ENCODE measurements at regions of chr10 and their contacts with region 1.

Region 1: DNA sequence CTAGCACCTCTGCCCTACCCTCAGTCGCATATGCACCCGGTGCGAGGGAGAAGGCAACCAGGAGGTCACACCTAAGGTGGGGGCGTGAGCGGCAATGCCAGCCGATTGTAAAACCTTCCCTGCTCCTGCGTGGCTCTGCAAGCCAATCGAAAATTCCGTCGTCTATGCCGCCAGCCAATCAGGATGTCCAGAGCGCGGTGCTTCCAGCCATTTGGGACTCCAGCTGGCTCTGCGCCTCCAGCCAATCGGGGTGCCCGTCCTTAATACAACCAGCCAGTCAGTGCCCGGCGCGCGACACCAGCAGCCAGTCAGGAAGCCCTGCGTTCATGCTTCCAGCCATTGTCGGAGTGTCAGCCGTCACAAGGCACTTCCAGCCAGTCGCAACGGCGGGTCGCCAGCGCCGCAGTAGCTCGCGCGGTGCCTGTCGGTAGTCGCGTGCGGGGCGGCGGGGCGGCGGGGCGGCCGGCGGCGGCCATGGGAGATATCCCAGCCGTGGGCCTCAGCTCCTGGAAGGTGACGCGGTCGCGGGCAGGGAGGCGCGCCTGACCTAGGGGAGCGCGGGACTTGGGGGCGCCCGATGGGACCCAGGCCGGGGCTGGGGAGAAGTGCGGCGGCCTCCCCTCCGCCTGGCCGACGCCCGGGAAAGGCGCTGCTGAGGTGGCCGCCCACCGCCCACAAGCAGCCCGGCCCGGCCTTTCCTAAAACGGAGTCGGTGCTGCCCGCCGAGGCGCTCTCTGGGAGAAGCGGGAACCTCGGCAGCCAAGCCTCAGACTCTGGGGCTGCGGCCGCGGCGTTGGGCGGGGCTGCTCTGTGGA is at the start of gene AKR1E2:
- DNase-seq: peak; percentile 48 to 86 (median 73)
- ATAC-seq: peak; percentile 92 to 94 (median 93)
- H3K4me3 ChIP-seq: peak within 1 kb of the TSS; percentile 49
- H3K4me3 Mint-ChIP-seq: peak within 1 kb of the TSS; percentile 73 to 76 (median 73)
- H3K27ac ChIP-seq: peak within 1 kb of the TSS; percentile 33
- H3K27ac Mint-ChIP-seq: peak within 1 kb of the TSS; percentile 56 to 77
- H3K4me1 ChIP-seq: peaks cover 4 to 15% of the 10 kb centered on the region in 2 experiments
- H3K4me1 Mint-ChIP-seq: peaks cover 12 to 41% (median 20%) of the 10 kb centered on the region in 3 donors
- H3K27me3 ChIP-seq: peaks cover 0 to 26% of the 10 kb centered on the region in 2 experiments
- H3K27me3 Mint-ChIP-seq: peaks cover 4 to 59% of the 10 kb centered on the region in 2 donors
- total RNA-seq, gene AKR1E2: 3.7 to 24.5 (median 10.8) TPM

Region 2: GRCh38 chr10:3538658-3539531 is 1287.2 kb before region 1 on chr10:
- CTCF ChIA-PET with region 1: no interaction called
- POLR2A ChIA-PET with region 1: interaction called in 1 of 2 experiments, 12 read pairs
- DNase-seq: no peak
- ATAC-seq: no peak
- H3K4me3 ChIP-seq: no peak overlapping the region
- H3K4me3 Mint-ChIP-seq: no peak overlapping the region
- H3K27ac ChIP-seq: no peak overlapping the region
- H3K27ac Mint-ChIP-seq: no peak overlapping the region
- H3K4me1 ChIP-seq: no peaks in the 10 kb centered on the region
- H3K4me1 Mint-ChIP-seq: no peaks in the 10 kb centered on the region
- H3K27me3 ChIP-seq: peaks cover 0 to under 1% of the 10 kb centered on the region in 2 experiments
- H3K27me3 Mint-ChIP-seq: no peaks in the 10 kb centered on the region

Region 3: DNA sequence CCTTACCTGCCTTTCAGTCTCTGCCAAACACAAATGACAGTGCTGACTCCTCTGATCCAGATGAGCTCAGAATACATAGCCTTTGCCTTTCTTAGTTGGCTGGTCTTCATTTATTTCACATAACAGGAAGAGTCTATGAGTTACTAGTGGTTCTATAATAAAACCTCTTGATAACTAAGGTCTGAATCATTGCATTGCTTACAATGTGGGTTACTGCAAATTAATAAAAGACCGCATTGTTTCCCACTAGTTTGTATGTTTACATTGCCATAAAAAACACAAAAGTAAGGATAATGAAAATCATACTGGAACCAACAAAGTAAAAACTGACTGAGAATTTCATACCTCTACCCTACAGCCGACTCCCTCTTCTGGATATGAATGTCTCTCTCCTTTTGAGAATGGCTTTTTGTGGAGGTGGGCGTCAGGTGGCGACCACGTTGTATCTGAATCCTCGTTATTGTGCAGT is 62.1 kb before region 1 on chr10:
- CTCF ChIA-PET with region 1: no interaction called
- POLR2A ChIA-PET with region 1: no interaction called
- DNase-seq: no peak
- ATAC-seq: no peak
- H3K4me3 ChIP-seq: no peak overlapping the region
- H3K4me3 Mint-ChIP-seq: no peak overlapping the region
- H3K27ac ChIP-seq: no peak overlapping the region
- H3K27ac Mint-ChIP-seq: no peak overlapping the region
- H3K4me1 ChIP-seq: no peaks in the 10 kb centered on the region
- H3K4me1 Mint-ChIP-seq: no peaks in the 10 kb centered on the region
- H3K27me3 ChIP-seq: no peaks in the 10 kb centered on the region
- H3K27me3 Mint-ChIP-seq: peaks cover 6 to 24% of the 10 kb centered on the region in 2 donors

Region 4: DNA sequence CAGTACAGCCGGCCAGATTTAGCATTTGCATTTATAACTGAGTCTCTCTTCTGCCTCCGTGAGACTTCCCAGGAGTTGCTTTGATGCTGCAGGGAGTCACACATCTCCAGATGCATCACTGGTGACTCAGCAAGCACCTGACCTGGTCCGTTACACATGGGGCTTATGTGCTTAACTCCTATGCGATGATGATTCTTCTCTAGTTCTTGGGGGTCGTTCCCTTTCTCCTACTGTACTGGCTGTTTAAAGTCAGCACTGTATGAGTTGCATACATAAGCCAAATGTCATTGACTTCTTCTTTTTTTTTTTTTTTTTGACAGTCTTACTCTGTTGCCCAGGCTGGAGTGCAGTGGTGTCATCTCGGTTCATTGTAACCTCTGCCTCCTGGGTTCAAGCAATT is 13.0 kb before region 1 on chr10:
- CTCF ChIA-PET with region 1: interaction called, 3 to 11 read pairs
- POLR2A ChIA-PET with region 1: no interaction called
- DNase-seq: no peak
- ATAC-seq: no peak
- H3K4me3 ChIP-seq: no peak overlapping the region
- H3K4me3 Mint-ChIP-seq: no peak overlapping the region
- H3K27ac ChIP-seq: no peak overlapping the region
- H3K27ac Mint-ChIP-seq: no peak overlapping the region
- H3K4me1 ChIP-seq: peaks cover 0 to 4% of the 10 kb centered on the region in 2 experiments
- H3K4me1 Mint-ChIP-seq: no peaks in the 10 kb centered on the region
- H3K27me3 ChIP-seq: peaks cover 0 to 7% of the 10 kb centered on the region in 2 experiments
- H3K27me3 Mint-ChIP-seq: peaks cover 0 to 7% of the 10 kb centered on the region in 2 donors